Lower leg skin (tissue), 4 donors: ENCODE measurements at regions of chr16 and their contacts with region 1.

Region 1: GRCh38 chr16:84277237-84277823 is 17.3 kb upstream of the WFDC1 start:
- DNase-seq: peak; percentile 46 to 89
- H3K4me3 ChIP-seq: no peak overlapping the region
- CTCF ChIP-seq: no peak
- POLR2A ChIP-seq: no peak

Region 2: DNA sequence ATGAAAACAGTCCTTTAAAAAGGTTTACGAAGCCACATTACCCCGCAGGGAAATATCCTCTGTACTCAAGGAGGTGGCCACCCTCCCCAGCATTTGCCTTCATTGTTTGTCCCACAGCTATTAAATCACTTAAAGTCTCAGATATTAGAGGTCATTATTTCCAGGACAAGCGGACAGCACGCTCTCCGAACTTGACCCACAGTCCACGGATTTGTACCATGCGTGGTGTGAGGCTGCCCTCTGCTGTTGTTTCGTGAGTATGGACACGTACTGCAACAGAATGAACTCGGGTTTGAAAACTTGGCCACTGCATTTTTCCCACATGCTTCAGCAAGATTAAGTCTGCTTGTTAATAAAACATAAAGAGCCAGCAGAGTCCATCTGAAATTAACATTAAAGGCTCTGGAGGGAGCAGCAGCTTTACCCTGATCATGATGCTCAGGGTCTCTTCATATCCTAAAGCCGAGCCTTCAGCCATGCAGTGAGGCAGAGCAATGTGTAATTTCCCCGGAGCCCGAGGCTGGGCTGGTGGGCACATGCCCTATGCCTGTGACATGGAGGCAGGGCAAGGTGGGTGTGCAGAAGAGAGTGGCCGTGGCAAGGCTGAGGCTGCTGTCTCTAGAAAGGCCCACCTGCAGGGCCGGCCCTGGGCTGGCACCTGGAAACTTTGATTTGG is 207.4 kb after region 1 on chr16:
- intact Hi-C with region 1: loop called (anchors 10 kb)
- DNase-seq: peak in 1 of 2 donors; percentile 83
- H3K4me3 ChIP-seq: no peak overlapping the region
- CTCF ChIP-seq: no peak
- POLR2A ChIP-seq: no peak